ENCODE measurements at regions of chr22 and their contacts with region 1.

Region 1: DNA sequence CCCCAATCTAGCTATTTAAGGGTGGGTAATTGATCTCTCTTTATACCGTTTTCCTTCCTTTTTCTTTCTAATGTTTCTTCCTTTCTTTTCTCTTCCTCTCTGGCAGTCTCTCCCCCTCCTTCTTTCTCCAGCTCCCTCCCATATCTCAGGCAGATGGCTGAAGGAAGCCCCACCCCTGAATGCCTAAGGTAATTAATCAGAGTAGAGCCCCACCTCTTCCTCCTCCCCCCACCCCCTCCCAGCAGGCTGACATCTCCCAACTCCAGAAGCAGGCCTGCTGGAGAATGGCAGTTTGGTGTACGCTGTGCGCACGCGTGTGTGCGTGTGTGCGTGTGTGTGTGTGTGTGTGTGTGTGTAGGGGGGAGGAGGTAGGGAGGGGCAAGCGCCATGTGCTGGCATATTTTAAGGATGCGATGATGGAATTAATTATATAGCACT is 122.6 kb downstream of the APOL5 start:
- DNase-seq: peak; percentile 82
- H3K4me3 ChIP-seq: peak overlapping the region; percentile 36 to 46
- H3K27ac ChIP-seq: peak overlapping the region; percentile 79
- H3K4me1 ChIP-seq: peaks cover 3% of the 10 kb centered on the region
- H3K27me3 ChIP-seq: no peaks in the 10 kb centered on the region
- CTCF ChIP-seq: peak in 1 of 4 experiments; percentile 11
- POLR2A ChIP-seq: peak; percentile 39

Region 2: GRCh38 chr22:35749808-35750207 is 90.5 kb before region 1 on chr22:
- intact Hi-C with region 1: no loop called
- DNase-seq: no peak
- H3K4me3 ChIP-seq: no peak overlapping the region
- H3K27ac ChIP-seq: no peak overlapping the region
- H3K4me1 ChIP-seq: no peaks in the 10 kb centered on the region
- H3K27me3 ChIP-seq: no peaks in the 10 kb centered on the region
- CTCF ChIP-seq: no peak
- POLR2A ChIP-seq: no peak

Region 3: GRCh38 chr22:35894937-35895708 is 54.8 kb after region 1 on chr22:
- intact Hi-C with region 1: loop called (anchors 5 kb)
- DNase-seq: peak; percentile 51
- H3K4me3 ChIP-seq: peak overlapping the region; percentile 4 to 9
- H3K27ac ChIP-seq: peak overlapping the region; percentile 45 to 54
- H3K4me1 ChIP-seq: peaks cover 4% of the 10 kb centered on the region
- H3K27me3 ChIP-seq: no peaks in the 10 kb centered on the region
- CTCF ChIP-seq: no peak
- POLR2A ChIP-seq: no peak

Region 4: DNA sequence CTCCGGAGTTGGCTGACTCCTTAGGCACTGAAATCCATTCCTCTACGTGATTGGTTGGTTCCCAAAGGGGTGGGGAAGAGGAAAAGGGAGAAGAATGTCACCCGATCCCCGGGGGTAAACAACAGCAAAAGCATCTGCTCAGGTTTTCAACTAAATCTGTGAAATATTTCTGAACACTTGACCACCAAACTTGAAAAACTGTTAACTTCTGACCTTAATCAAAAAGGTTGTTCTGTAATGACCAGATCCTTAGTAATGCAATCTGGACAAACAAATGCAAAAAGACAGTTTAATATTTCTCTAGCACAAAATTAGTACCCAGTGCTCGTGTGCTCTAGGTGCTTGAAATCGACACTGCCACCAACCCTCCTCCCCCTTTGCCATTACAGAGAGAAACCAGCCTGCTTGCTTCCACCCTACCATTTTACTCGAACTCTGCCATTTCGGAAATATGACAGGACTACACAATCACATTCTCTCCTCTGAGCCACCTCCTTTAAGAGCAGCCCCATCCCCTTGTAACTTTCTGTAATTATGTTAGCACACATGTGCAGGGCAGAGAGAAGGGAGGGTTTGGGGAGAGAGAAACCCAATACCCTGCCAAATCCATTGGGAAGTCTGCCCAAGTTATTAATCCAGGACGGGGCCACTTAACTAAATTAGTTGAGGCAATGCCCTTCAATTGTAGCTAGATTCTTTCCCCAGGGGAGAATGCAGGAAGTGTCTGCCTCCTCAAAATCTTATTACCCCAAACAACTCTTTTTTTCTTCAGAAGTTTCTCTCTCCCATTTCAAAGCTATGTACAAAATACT is 74.5 kb after region 1 on chr22:
- intact Hi-C with region 1: loop called (anchors 5 kb)
- DNase-seq: peak; percentile 86
- H3K4me3 ChIP-seq: peak overlapping the region; percentile 23 to 32
- H3K27ac ChIP-seq: peak overlapping the region; percentile 79 to 82
- H3K4me1 ChIP-seq: peaks cover 17% of the 10 kb centered on the region
- H3K27me3 ChIP-seq: no peaks in the 10 kb centered on the region
- CTCF ChIP-seq: no peak
- POLR2A ChIP-seq: no peak

Region 5: DNA sequence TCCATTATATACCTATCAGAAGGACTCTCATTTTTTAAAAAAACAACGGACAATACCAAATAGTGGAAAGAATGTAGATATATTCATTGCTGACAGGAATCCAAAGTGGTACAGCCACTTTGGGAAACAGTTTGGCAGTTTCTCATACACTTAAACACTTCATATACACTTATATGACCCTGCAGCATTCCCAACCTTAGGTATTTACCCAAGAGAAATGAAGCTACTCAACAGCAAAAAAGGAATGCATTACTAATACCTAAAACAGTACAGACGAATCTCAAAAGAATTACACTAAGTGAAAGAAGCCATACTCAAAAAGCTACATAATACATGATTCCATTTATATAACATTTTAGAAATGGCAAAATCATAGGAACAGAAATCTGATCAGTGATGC is 136.8 kb after region 1 on chr22:
- intact Hi-C with region 1: no loop called
- DNase-seq: no peak
- H3K4me3 ChIP-seq: no peak overlapping the region
- H3K27ac ChIP-seq: no peak overlapping the region
- H3K4me1 ChIP-seq: peaks cover 19% of the 10 kb centered on the region
- H3K27me3 ChIP-seq: no peaks in the 10 kb centered on the region
- CTCF ChIP-seq: no peak
- POLR2A ChIP-seq: no peak

Measured in prostate gland (tissue), 2 donors.